HCT116 (cell line): ENCODE measurements at regions of chr12 and their contacts with region 1.

Region 1: DNA sequence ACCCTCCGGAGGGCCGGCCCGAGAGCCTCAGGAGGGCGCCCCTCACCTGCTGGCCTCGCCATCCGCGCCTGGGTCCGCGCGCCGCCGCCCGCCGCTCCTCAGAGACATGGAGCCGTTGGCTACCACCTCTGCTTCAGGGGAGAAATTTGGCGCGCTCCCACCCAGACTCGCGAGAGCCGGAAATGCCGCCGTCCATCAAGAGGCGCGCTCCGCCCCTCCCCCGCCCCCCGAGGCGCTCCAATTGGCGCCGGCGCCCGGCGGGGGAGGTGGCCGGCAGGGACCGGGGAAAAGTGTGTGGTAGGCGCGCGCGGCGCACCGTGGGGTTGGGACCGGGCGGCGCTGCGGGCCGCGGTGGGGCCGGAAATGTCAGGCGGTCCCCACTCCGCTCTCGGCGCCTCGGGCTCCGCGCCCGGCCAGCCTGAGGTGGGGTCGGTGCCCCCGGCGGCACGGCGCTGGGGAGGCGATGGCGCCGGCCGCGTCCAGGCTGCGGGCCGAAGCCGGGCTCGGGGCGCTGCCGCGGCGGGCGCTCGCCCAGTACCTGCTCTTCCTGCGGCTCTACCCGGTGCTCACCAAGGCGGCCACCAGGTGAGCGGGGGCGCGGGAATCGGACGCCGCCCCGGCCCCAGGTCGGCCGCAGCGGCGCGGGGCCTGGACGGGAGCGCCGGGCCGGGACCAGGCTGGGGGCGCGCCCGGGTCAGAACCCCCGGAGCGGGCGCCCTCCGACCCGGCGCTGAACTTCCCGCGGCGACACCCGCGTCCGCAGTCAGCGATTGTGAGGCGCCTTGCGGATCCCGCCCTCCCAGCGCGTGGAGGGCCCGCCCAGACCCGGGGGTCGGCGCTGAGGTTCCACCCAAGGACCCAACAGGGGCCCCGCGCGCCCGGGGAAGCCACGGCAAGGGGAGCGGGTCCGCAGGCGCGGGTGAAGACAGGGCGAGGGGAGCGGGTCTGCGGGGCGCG is at the starts of genes POLE and PXMP2:
- DNase-seq: peak; percentile 87
- ATAC-seq: peak; percentile 92
- H3K4me3 ChIP-seq: peak within 1 kb of the TSS; percentile 66 to 72
- H3K27ac ChIP-seq: peak within 1 kb of the TSS; percentile 92
- H3K4me1 ChIP-seq: peaks cover 8 to 19% of the 10 kb centered on the region in 2 experiments
- H3K27me3 ChIP-seq: no peaks in the 10 kb centered on the region
- CTCF ChIP-seq: no peak
- POLR2A ChIP-seq: peak; percentile 67
- RAD21 ChIP-seq: no peak
- total RNA-seq, gene POLE: 128 TPM
- total RNA-seq, gene PXMP2: 30.9 TPM

Region 2: GRCh38 chr12:132429946-132430643 is 257.4 kb before region 1 on chr12:
- CTCF ChIA-PET with region 1: no interaction called
- POLR2A ChIA-PET with region 1: no interaction called
- RAD21 ChIA-PET with region 1: no interaction called
- intact Hi-C with region 1: no loop called
- DNase-seq: peak; percentile 41
- ATAC-seq: peak; percentile 85
- H3K4me3 ChIP-seq: peak overlapping the region; percentile 28 to 52
- H3K27ac ChIP-seq: no peak overlapping the region; the same call in 1 of the 2 replicates
- H3K4me1 ChIP-seq: peaks cover 14 to 26% of the 10 kb centered on the region in 2 experiments
- H3K27me3 ChIP-seq: no peaks in the 10 kb centered on the region
- CTCF ChIP-seq: no peak
- POLR2A ChIP-seq: no peak
- RAD21 ChIP-seq: no peak

Region 3: GRCh38 chr12:132921685-132922084 is 234.2 kb after region 1 on chr12:
- CTCF ChIA-PET with region 1: no interaction called
- POLR2A ChIA-PET with region 1: no interaction called
- RAD21 ChIA-PET with region 1: no interaction called
- intact Hi-C with region 1: loop called (anchors 5 kb)
- DNase-seq: peak; percentile 4
- ATAC-seq: no peak
- H3K4me3 ChIP-seq: no peak overlapping the region
- H3K27ac ChIP-seq: no peak overlapping the region
- H3K4me1 ChIP-seq: no peaks in the 10 kb centered on the region
- H3K27me3 ChIP-seq: no peaks in the 10 kb centered on the region
- CTCF ChIP-seq: peak; percentile 25 to 61 (median 52); a peak in 5 of 6 replicates
- POLR2A ChIP-seq: no peak
- RAD21 ChIP-seq: peak; percentile 41; the same call in 1 of the 2 replicates

Region 4: GRCh38 chr12:133058203-133059125 is 371.0 kb after region 1 on chr12:
- CTCF ChIA-PET with region 1: no interaction called
- POLR2A ChIA-PET with region 1: no interaction called
- RAD21 ChIA-PET with region 1: no interaction called
- intact Hi-C with region 1: no loop called
- DNase-seq: no peak
- ATAC-seq: no peak
- H3K4me3 ChIP-seq: no peak overlapping the region
- H3K27ac ChIP-seq: no peak overlapping the region
- H3K4me1 ChIP-seq: no peaks in the 10 kb centered on the region
- H3K27me3 ChIP-seq: no peaks in the 10 kb centered on the region
- CTCF ChIP-seq: no peak
- POLR2A ChIP-seq: no peak
- RAD21 ChIP-seq: no peak